Uterus (tissue), 4 donors: ENCODE measurements at regions of chr18 and their contacts with region 1.

Region 1: GRCh38 chr18:62714671-62715435 is 488 bp upstream of the PHLPP1 start:
- DNase-seq: peak; percentile 100
- H3K4me3 ChIP-seq: peak overlapping the region; percentile 59 to 93
- H3K27ac ChIP-seq: peak overlapping the region; percentile 99 to 100
- H3K4me1 ChIP-seq: no peaks in the 10 kb centered on the region
- H3K27me3 ChIP-seq: no peaks in the 10 kb centered on the region
- CTCF ChIP-seq: peak; percentile 84 to 92 (median 86)
- POLR2A ChIP-seq: no peak

Region 2: DNA sequence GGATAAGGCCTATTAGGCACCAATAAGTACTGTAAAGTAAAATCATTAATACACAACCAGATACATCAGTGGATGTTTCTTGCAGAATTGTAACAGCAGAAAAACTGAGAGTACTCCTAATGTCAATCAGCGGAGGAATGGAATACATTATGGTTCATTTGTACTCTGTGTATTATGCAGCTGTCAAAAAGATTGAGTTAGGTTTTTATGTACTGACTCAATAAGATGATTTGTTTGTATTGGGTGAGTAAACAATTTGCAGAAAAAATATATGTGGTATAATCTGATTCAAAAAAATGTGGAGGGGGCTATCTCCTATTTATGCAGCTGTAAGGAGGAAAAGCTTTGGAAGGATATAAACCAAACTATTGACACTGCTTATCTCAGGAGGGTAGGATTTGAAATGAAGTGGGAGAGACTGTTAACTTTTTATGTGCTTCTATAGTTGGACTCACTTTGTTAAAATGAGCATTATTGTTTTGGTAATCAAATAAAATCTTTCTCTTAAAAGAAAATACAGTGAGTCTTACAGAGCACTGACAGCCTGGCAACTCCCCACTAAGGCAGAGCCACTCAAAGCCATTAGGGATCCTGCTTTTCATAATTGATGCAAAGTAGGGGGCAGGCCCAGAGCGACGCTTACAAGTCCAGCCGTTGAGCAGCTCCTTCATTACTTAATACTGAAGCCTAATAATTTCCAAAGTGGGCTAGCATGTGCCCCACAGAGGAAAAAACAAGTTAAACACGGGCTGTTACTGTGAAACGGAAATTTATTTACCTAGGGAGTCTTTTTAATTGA is 169.3 kb after region 1 on chr18:
- intact Hi-C with region 1: no loop called
- DNase-seq: no peak
- H3K4me3 ChIP-seq: no peak overlapping the region
- H3K27ac ChIP-seq: no peak overlapping the region
- H3K4me1 ChIP-seq: no peaks in the 10 kb centered on the region
- H3K27me3 ChIP-seq: no peaks in the 10 kb centered on the region
- CTCF ChIP-seq: no peak
- POLR2A ChIP-seq: no peak

Region 3: DNA sequence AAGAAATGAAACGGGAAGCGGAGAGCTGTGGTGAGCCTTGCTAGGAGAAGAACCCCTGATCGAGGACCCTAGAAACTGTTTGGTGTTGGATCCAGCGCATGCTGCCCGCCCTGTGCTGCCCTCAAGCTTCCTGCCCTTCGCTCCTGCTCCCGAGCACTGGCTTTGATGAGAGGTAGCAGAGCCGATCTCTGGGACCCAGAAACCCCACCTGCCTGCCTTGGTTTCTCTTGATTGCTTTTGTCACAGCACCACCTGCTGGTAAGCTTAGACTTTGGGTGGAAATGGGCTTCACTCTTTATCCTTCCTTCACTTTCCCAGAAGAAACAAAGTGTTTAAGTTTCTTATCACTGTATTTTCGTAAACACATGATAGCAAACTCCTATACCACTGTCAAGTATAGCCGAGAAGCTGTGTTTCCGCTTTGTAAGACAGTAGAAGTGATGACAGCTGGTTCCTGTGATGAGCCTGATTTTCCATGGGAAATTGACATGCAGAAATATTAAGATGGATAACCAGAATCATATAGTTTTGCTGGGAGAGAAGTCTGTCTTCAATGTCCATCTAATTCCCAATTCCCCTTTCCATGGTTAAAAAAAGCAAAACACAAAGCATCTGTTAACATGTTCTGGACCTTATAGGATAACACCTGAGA is 267.9 kb after region 1 on chr18:
- intact Hi-C with region 1: loop called (anchors 10 kb)
- DNase-seq: peak; percentile 59 to 75
- H3K4me3 ChIP-seq: peak overlapping the region in 1 of 2 donors; percentile 27
- H3K27ac ChIP-seq: peak overlapping the region in 1 of 2 donors; percentile 33
- H3K4me1 ChIP-seq: no peaks in the 10 kb centered on the region
- H3K27me3 ChIP-seq: no peaks in the 10 kb centered on the region
- CTCF ChIP-seq: peak; percentile 74 to 85 (median 80)
- POLR2A ChIP-seq: no peak